Activated naive CD8-positive, alpha-beta T cell treated with anti-CD3 and anti-CD28 coated beads, Interleukin-2, amount 10 ng/mL, durations not matched to agents 7 days and 5 days (primary cell): ENCODE measurements at regions of chr17 and their contacts with region 1.

Region 1: GRCh38 chr17:19362277-19363113 is at the start of gene B9D1:
- DNase-seq: peak; percentile 93
- ATAC-seq: peak; percentile 87
- H3K4me3 Mint-ChIP-seq: peak within 1 kb of the TSS; percentile 86
- H3K27ac Mint-ChIP-seq: peak within 1 kb of the TSS; percentile 63
- H3K4me1 Mint-ChIP-seq: peaks cover 3% of the 10 kb centered on the region
- H3K27me3 Mint-ChIP-seq: peaks cover 19% of the 10 kb centered on the region
- total RNA-seq, gene B9D1: 1.6 to 2.1 TPM

Region 2: GRCh38 chr17:19317359-19318095 is 45.0 kb before region 1 on chr17:
- POLR2A ChIA-PET with region 1: no interaction called
- DNase-seq: no peak
- ATAC-seq: no peak
- H3K4me3 Mint-ChIP-seq: no peak overlapping the region
- H3K27ac Mint-ChIP-seq: no peak overlapping the region
- H3K4me1 Mint-ChIP-seq: no peaks in the 10 kb centered on the region
- H3K27me3 Mint-ChIP-seq: peaks cover 7% of the 10 kb centered on the region

Region 3: GRCh38 chr17:19377602-19378392 is 15.3 kb after region 1 on chr17:
- POLR2A ChIA-PET with region 1: interaction called, 13 read pairs
- DNase-seq: peak; percentile 96
- ATAC-seq: peak; percentile 96
- H3K4me3 Mint-ChIP-seq: peak overlapping the region; percentile 99
- H3K27ac Mint-ChIP-seq: peak overlapping the region; percentile 98
- H3K4me1 Mint-ChIP-seq: peaks cover 15% of the 10 kb centered on the region
- H3K27me3 Mint-ChIP-seq: no peaks in the 10 kb centered on the region